ENCODE measurements at regions of chr6 and their contacts with region 1.

Region 1: GRCh38 chr6:36302227-36302976 is 32.5 kb downstream of the PNPLA1 start:
- DNase-seq: peak; percentile 84 to 97 (median 93)
- ATAC-seq: peak; percentile 99
- H3K4me3 ChIP-seq: no peak overlapping the region
- H3K4me3 Mint-ChIP-seq: no peak overlapping the region
- H3K27ac ChIP-seq: no peak overlapping the region
- H3K27ac Mint-ChIP-seq: no peak overlapping the region
- H3K4me1 ChIP-seq: no peaks in the 10 kb centered on the region
- H3K4me1 Mint-ChIP-seq: peaks cover 6% of the 10 kb centered on the region
- H3K27me3 ChIP-seq: peaks cover 0 to 2% of the 10 kb centered on the region in 2 experiments
- H3K27me3 Mint-ChIP-seq: peaks cover 14% of the 10 kb centered on the region
- CTCF ChIP-seq: peak; percentile 99

Region 2: DNA sequence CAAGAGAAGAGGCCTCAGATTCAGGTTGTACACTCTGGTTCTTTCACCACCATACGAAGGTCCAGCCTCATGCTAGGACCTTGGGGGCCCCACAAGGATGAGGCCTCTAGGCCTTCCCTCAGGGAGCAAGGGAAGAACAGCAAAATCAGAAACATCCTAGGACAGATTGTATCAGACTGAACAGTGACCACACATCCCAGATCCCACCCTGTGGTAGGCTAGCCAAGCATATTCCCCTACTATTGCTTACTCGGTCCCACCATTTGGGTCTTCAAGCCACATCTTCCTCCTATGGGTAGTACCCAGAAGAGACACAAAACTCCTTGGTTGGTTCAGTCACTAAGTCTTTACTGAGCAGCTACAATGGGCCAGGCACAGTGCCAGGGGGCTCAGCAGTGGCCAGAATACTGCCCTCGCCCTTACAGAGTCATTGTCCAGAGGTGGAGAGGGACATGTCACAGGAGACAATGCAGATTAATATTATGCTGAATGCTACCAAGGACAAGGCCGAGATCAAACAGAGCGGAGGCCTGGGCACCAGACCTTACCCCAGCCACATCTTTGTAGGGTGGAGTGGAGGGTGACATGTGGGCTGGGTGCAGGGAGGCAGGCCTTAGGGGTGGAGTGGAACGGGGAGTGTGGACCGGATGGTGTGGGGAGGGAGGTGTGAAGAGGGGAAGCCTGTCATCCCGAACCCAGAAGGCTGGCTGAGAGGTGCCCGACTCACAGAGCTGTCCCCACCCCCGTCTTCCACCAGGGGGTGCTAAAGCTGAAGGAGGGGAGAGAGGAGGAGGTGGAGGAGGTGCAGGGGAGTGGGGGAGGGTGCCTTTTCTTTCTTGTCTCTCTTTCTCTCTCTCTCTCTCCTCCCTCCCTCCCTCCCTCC is 178.9 kb before region 1 on chr6:
- CTCF ChIA-PET with region 1: interaction called, 8 read pairs
- POLR2A ChIA-PET with region 1: no interaction called
- intact Hi-C with region 1: loop called in 1 of 2 experiments (anchors 5 kb)
- DNase-seq: peak; percentile 80 to 96 (median 90)
- ATAC-seq: peak; percentile 74
- H3K4me3 ChIP-seq: no peak overlapping the region
- H3K4me3 Mint-ChIP-seq: peak overlapping the region; percentile 54
- H3K27ac ChIP-seq: peak overlapping the region; percentile 38 to 99
- H3K27ac Mint-ChIP-seq: peak overlapping the region; percentile 100
- H3K4me1 ChIP-seq: peaks cover 87% of the 10 kb centered on the region
- H3K4me1 Mint-ChIP-seq: peaks cover 89% of the 10 kb centered on the region
- H3K27me3 ChIP-seq: no peaks in the 10 kb centered on the region
- H3K27me3 Mint-ChIP-seq: no peaks in the 10 kb centered on the region
- CTCF ChIP-seq: peak; percentile 54

Region 3: DNA sequence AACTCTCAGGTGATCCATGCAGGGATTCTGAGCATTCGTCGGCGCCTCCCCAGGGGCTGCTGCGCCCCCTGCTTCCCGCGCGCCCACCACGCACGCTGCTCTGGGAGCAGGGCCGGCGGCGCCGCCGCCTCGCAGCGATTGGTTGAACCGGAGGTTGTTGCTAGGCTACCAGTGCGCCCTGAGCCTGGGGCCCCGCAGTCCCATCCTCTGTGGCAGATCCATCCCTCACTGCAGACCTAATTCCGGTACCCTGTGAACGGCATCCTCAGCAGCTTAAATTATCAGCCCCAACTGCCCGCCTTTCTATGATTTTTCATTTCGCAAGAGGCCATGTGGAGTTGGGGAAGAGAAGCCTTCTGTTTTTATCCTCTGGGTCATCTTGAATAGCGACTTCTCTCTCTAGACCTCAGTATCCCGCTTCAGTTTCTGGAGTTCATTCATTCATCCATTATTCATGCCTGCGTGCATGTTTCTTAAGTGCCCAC is 17.2 kb before region 1 on chr6:
- CTCF ChIA-PET with region 1: interaction called, 10 read pairs
- POLR2A ChIA-PET with region 1: no interaction called
- intact Hi-C with region 1: no loop called
- DNase-seq: peak in 1 of 9 experiments; percentile 17
- ATAC-seq: no peak
- H3K4me3 ChIP-seq: no peak overlapping the region
- H3K4me3 Mint-ChIP-seq: no peak overlapping the region
- H3K27ac ChIP-seq: no peak overlapping the region
- H3K27ac Mint-ChIP-seq: no peak overlapping the region
- H3K4me1 ChIP-seq: peaks cover 6% of the 10 kb centered on the region
- H3K4me1 Mint-ChIP-seq: peaks cover 6% of the 10 kb centered on the region
- H3K27me3 ChIP-seq: peaks cover 0 to 4% of the 10 kb centered on the region in 2 experiments
- H3K27me3 Mint-ChIP-seq: peaks cover 42% of the 10 kb centered on the region
- CTCF ChIP-seq: no peak

Region 4: GRCh38 chr6:36290661-36291620 is 11.5 kb before region 1 on chr6:
- CTCF ChIA-PET with region 1: interaction called, 11 read pairs
- POLR2A ChIA-PET with region 1: no interaction called
- intact Hi-C with region 1: no loop called
- DNase-seq: peak in 1 of 9 experiments; percentile 43
- ATAC-seq: no peak
- H3K4me3 ChIP-seq: no peak overlapping the region
- H3K4me3 Mint-ChIP-seq: no peak overlapping the region
- H3K27ac ChIP-seq: no peak overlapping the region
- H3K27ac Mint-ChIP-seq: no peak overlapping the region
- H3K4me1 ChIP-seq: peaks cover 6% of the 10 kb centered on the region
- H3K4me1 Mint-ChIP-seq: peaks cover 6% of the 10 kb centered on the region
- H3K27me3 ChIP-seq: no peaks in the 10 kb centered on the region
- H3K27me3 Mint-ChIP-seq: peaks cover 7% of the 10 kb centered on the region
- CTCF ChIP-seq: no peak

Region 5: GRCh38 chr6:36314221-36315014 is 12.0 kb after region 1 on chr6:
- CTCF ChIA-PET with region 1: interaction called, 17 read pairs
- POLR2A ChIA-PET with region 1: no interaction called
- intact Hi-C with region 1: no loop called
- DNase-seq: peak in 1 of 9 experiments; percentile 29
- ATAC-seq: peak; percentile 58
- H3K4me3 ChIP-seq: no peak overlapping the region
- H3K4me3 Mint-ChIP-seq: no peak overlapping the region
- H3K27ac ChIP-seq: no peak overlapping the region
- H3K27ac Mint-ChIP-seq: no peak overlapping the region
- H3K4me1 ChIP-seq: no peaks in the 10 kb centered on the region
- H3K4me1 Mint-ChIP-seq: no peaks in the 10 kb centered on the region
- H3K27me3 ChIP-seq: no peaks in the 10 kb centered on the region
- H3K27me3 Mint-ChIP-seq: no peaks in the 10 kb centered on the region
- CTCF ChIP-seq: no peak

Region 6: GRCh38 chr6:36360241-36361054 is 58.0 kb after region 1 on chr6:
- CTCF ChIA-PET with region 1: interaction called, 5 read pairs
- POLR2A ChIA-PET with region 1: no interaction called
- intact Hi-C with region 1: loop called (anchors 1 kb)
- DNase-seq: peak; percentile 38 to 81 (median 69)
- ATAC-seq: peak; percentile 93
- H3K4me3 ChIP-seq: no peak overlapping the region
- H3K4me3 Mint-ChIP-seq: no peak overlapping the region
- H3K27ac ChIP-seq: no peak overlapping the region
- H3K27ac Mint-ChIP-seq: no peak overlapping the region
- H3K4me1 ChIP-seq: peaks cover 4% of the 10 kb centered on the region
- H3K4me1 Mint-ChIP-seq: peaks cover 11% of the 10 kb centered on the region
- H3K27me3 ChIP-seq: no peaks in the 10 kb centered on the region
- H3K27me3 Mint-ChIP-seq: peaks cover 3% of the 10 kb centered on the region
- CTCF ChIP-seq: peak; percentile 74

Region 7: GRCh38 chr6:36759148-36759759 is 456.9 kb after region 1 on chr6:
- CTCF ChIA-PET with region 1: interaction called, 3 read pairs
- POLR2A ChIA-PET with region 1: no interaction called
- intact Hi-C with region 1: loop called in 1 of 2 experiments (anchors 1 kb)
- DNase-seq: peak; percentile 48 to 83 (median 81)
- ATAC-seq: peak; percentile 50
- H3K4me3 ChIP-seq: no peak overlapping the region
- H3K4me3 Mint-ChIP-seq: no peak overlapping the region
- H3K27ac ChIP-seq: no peak overlapping the region
- H3K27ac Mint-ChIP-seq: no peak overlapping the region
- H3K4me1 ChIP-seq: peaks cover 15% of the 10 kb centered on the region
- H3K4me1 Mint-ChIP-seq: peaks cover 31% of the 10 kb centered on the region
- H3K27me3 ChIP-seq: no peaks in the 10 kb centered on the region
- H3K27me3 Mint-ChIP-seq: no peaks in the 10 kb centered on the region
- CTCF ChIP-seq: peak; percentile 96

Measured in CD8-positive, alpha-beta T cell (primary cell).